ENCODE measurements at regions of chr4 and their contacts with region 1.

Region 1: GRCh38 chr4:183261953-183262775 is 57.9 kb downstream of the CLDN22 start:
- DNase-seq: peak; percentile 83
- ATAC-seq: peak; percentile 95
- H3K4me3 Mint-ChIP-seq: no peak overlapping the region
- H3K27ac Mint-ChIP-seq: no peak overlapping the region
- H3K4me1 Mint-ChIP-seq: peaks cover 6% of the 10 kb centered on the region
- H3K27me3 Mint-ChIP-seq: peaks cover 8% of the 10 kb centered on the region

Region 2: DNA sequence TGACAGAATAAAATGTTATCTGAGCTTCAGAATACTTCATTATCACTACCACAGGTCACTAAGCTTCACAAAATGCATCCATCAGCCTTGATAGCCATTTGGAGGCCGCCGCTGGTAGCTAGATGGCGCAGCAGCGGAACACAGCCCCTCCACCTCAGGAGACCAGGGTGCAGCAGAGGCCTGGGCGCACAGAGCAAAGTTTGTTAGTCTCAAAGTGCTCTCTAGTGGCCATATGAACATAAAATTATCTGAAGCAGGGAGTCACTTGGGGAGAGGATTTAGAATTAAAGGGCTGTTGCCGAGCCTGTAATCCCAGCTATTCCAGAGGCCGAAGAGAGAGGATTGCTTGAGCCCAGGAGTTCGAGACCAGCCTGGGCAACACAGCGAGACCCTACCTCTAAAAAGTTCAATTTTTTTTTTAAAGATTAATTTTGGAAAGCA is 336.8 kb before region 1 on chr4:
- CTCF ChIA-PET with region 1: interaction called, 11 read pairs
- POLR2A ChIA-PET with region 1: no interaction called
- DNase-seq: peak; percentile 72
- ATAC-seq: peak; percentile 96
- H3K4me3 Mint-ChIP-seq: no peak overlapping the region
- H3K27ac Mint-ChIP-seq: no peak overlapping the region
- H3K4me1 Mint-ChIP-seq: peaks cover 4% of the 10 kb centered on the region
- H3K27me3 Mint-ChIP-seq: peaks cover 15% of the 10 kb centered on the region

Region 3: DNA sequence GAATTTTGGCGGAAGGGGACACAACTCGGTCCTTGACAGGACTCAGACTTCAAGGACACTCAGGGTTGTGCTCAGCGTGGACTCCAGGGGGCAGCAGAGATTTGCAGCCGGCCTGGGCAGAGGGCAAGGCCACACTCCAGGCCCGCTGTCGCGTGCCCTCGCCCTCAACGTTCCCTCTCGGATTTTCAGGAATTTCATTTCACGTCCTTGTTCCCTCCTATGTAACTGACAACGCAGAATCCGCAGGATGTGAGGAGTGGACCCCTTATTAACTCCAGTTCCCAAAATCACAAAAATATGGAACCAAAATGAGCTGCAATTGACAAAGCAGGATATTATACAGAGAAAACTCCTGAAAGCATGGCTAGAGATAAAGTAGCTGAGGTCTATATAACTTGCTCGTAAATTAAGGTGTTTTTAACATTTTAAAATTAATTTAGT is 323.9 kb before region 1 on chr4:
- CTCF ChIA-PET with region 1: interaction called, 74 read pairs
- POLR2A ChIA-PET with region 1: no interaction called
- DNase-seq: peak; percentile 72
- ATAC-seq: peak; percentile 98
- H3K4me3 Mint-ChIP-seq: no peak overlapping the region
- H3K27ac Mint-ChIP-seq: no peak overlapping the region
- H3K4me1 Mint-ChIP-seq: peaks cover 3% of the 10 kb centered on the region
- H3K27me3 Mint-ChIP-seq: peaks cover 8% of the 10 kb centered on the region

Region 4: DNA sequence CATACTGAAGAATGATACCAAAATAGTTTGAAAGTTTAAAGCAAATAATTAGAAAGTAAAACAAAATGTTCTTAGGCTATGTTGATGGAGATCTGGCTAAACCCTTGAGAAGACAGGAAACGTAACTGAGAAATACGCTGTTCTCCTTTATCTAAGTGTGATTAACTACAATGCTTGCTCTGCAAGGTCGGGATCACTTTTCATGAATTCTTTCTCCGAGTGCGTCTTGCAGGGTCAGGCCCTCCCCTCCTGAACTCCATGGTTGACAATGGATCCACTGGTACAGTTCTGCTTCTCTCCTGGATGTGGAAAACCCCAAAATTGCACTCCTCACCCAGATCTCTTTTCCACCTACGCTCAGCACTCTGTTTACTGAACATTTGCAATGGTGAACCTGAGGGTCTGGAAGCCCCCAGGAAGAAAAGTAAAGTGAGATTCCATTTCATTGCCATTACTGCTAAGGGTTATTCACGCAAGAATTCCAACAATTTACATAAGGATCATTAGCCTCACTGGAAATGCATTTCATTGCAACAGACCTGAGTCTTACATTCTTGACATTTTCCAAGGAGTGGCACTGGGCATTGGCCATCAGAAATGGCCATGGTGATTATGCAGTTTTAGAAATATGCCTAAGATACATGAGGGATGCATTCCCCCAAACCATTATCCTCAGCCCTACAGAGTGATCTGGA is 187.7 kb before region 1 on chr4:
- CTCF ChIA-PET with region 1: interaction called, 47 read pairs
- POLR2A ChIA-PET with region 1: no interaction called
- DNase-seq: no peak
- ATAC-seq: no peak
- H3K4me3 Mint-ChIP-seq: no peak overlapping the region
- H3K27ac Mint-ChIP-seq: no peak overlapping the region
- H3K4me1 Mint-ChIP-seq: no peaks in the 10 kb centered on the region
- H3K27me3 Mint-ChIP-seq: peaks cover 4% of the 10 kb centered on the region

Region 5: GRCh38 chr4:183249857-183250256 is 12.3 kb before region 1 on chr4:
- CTCF ChIA-PET with region 1: interaction called, 27 read pairs
- POLR2A ChIA-PET with region 1: no interaction called
- DNase-seq: no peak
- ATAC-seq: no peak
- H3K4me3 Mint-ChIP-seq: no peak overlapping the region
- H3K27ac Mint-ChIP-seq: no peak overlapping the region
- H3K4me1 Mint-ChIP-seq: no peaks in the 10 kb centered on the region
- H3K27me3 Mint-ChIP-seq: peaks cover 2% of the 10 kb centered on the region

Region 6: DNA sequence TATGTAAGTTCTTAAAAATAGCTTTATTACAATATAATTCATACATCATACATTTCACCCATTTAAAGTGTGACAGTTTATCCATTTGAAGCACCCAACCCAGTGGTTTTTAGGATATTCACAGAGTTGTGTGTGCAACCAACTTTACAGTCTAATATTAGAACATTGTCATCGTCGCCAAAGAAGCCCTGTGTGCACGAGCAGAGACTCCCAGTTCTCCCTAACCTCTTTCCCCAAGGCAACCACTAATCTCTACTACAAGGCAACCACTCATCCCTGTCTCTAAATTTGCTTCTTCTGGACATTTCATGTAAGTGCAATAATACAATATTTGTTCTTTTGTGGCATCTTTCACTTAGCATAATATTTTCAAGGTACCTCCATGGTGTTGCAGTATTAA is 10.2 kb after region 1 on chr4:
- CTCF ChIA-PET with region 1: interaction called, 13 read pairs
- POLR2A ChIA-PET with region 1: no interaction called
- DNase-seq: no peak
- ATAC-seq: no peak
- H3K4me3 Mint-ChIP-seq: no peak overlapping the region
- H3K27ac Mint-ChIP-seq: no peak overlapping the region
- H3K4me1 Mint-ChIP-seq: no peaks in the 10 kb centered on the region
- H3K27me3 Mint-ChIP-seq: peaks cover 4% of the 10 kb centered on the region

Measured in activated CD8-positive, alpha-beta T cell treated with anti-CD3 and anti-CD28 coated beads, Interleukin-2, amount 10 ng/mL, durations not matched to agents 7 days and 5 days (primary cell).